Mammary epithelial cell (primary cell): ENCODE measurements at regions of chr7 and their contacts with region 1.

Region 1: DNA sequence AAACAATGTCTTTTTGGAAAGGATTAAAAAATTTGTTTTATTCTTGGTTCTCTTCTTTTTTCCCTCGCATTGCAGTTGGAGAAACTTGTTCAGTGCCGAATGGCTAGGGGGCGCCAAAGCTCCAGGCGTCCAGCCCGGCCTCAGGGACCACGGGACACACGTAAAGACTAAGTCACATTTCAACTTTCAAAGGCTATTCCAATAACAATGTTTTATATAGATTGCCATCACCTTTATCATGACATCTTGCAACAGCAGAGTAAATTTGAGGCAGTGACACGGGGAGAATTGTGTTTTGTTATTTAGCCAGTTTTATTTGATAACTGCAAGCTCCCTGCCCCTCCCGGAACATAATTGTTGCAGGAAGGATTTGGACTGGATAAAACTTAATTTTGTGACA is 2.2 kb upstream of the IGFBP3 start:
- DNase-seq: peak; percentile 58
- H3K4me3 ChIP-seq: no peak overlapping the region
- H3K27ac ChIP-seq: no peak overlapping the region
- H3K4me1 ChIP-seq: peaks cover 43% of the 10 kb centered on the region
- H3K27me3 ChIP-seq: peaks cover 6% of the 10 kb centered on the region
- CTCF ChIP-seq: peak; percentile 93 to 97

Region 2: DNA sequence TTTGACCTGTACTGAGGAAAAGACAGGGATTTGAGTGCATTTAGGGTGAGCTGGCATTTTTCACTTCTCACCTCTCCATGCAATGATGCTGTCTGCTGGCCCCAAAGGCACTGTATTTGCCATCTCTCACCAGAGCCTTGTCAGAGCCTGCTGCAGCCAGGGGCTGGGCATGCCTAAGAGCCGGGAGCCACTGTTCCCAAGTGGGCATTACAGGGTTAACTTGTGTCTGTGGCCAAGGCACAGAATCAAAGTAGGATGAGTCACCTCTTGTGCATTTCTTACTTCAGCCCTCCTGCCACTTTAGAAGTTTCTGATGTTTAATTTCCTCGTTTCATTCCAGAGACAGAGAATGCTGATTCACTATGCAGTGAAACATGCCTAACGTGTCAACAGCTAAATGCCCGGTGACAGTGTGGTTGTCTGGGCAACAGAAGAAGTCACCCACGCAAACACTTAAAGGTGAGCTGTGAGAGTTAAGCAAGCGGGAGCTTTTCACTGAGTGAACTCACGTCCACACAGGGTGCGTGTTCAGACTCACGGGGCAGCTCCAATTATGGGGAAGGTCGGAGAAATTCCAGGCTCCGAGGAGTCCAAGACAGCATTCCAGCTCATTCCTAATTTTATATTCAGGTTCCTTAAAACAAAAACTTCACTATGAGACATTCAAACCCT is 54.9 kb after region 1 on chr7:
- CTCF ChIA-PET with region 1: no interaction called
- dilution Hi-C with region 1: no loop called
- in situ Hi-C with region 1: no loop called
- intact Hi-C with region 1: loop called (anchors 5 kb)
- DNase-seq: peak; percentile 99
- H3K4me3 ChIP-seq: no peak overlapping the region
- H3K27ac ChIP-seq: peak overlapping the region; percentile 98
- H3K4me1 ChIP-seq: peaks cover 25% of the 10 kb centered on the region
- H3K27me3 ChIP-seq: no peaks in the 10 kb centered on the region
- CTCF ChIP-seq: no peak

Region 3: GRCh38 chr7:46129831-46130230 is 206.5 kb after region 1 on chr7:
- CTCF ChIA-PET with region 1: no interaction called
- dilution Hi-C with region 1: no loop called
- in situ Hi-C with region 1: loop called in 1 of 2 experiments (anchors 10 kb)
- intact Hi-C with region 1: no loop called
- DNase-seq: peak; percentile 39
- H3K4me3 ChIP-seq: no peak overlapping the region
- H3K27ac ChIP-seq: no peak overlapping the region
- H3K4me1 ChIP-seq: peaks cover 3% of the 10 kb centered on the region
- H3K27me3 ChIP-seq: no peaks in the 10 kb centered on the region
- CTCF ChIP-seq: peak; percentile 43 to 73

Region 4: GRCh38 chr7:46215987-46216567 is 292.8 kb after region 1 on chr7:
- CTCF ChIA-PET with region 1: no interaction called
- dilution Hi-C with region 1: no loop called
- in situ Hi-C with region 1: no loop called
- intact Hi-C with region 1: loop called (anchors 5 kb)
- DNase-seq: peak; percentile 95
- H3K4me3 ChIP-seq: no peak overlapping the region
- H3K27ac ChIP-seq: peak overlapping the region; percentile 62
- H3K4me1 ChIP-seq: peaks cover 33% of the 10 kb centered on the region
- H3K27me3 ChIP-seq: no peaks in the 10 kb centered on the region
- CTCF ChIP-seq: no peak

Region 5: GRCh38 chr7:46776790-46777189 is 853.5 kb after region 1 on chr7:
- CTCF ChIA-PET with region 1: no interaction called
- dilution Hi-C with region 1: no loop called
- in situ Hi-C with region 1: no loop called
- intact Hi-C with region 1: loop called (anchors 1 kb)
- DNase-seq: peak; percentile 16
- H3K4me3 ChIP-seq: no peak overlapping the region
- H3K27ac ChIP-seq: no peak overlapping the region
- H3K4me1 ChIP-seq: no peaks in the 10 kb centered on the region
- H3K27me3 ChIP-seq: no peaks in the 10 kb centered on the region
- CTCF ChIP-seq: peak; percentile 49 to 58